ENCODE measurements at regions of chr4 and their contacts with region 1.

Region 1: GRCh38 chr4:77203380-77204197 is 46.6 kb downstream of the CCNG2 start:
- DNase-seq: peak; percentile 45 to 86
- ATAC-seq: peak; percentile 72 to 84 (median 75)
- H3K4me3 ChIP-seq: no peak overlapping the region
- H3K4me3 Mint-ChIP-seq: no peak overlapping the region
- H3K27ac ChIP-seq: no peak overlapping the region
- H3K27ac Mint-ChIP-seq: no peak overlapping the region
- H3K4me1 ChIP-seq: no peaks in the 10 kb centered on the region
- H3K4me1 Mint-ChIP-seq: peaks cover 0 to 6% of the 10 kb centered on the region in 2 donors
- H3K27me3 ChIP-seq: no peaks in the 10 kb centered on the region
- H3K27me3 Mint-ChIP-seq: peaks cover 0 to 10% of the 10 kb centered on the region in 2 donors
- CTCF ChIP-seq: peak; percentile 78

Region 2: GRCh38 chr4:77052352-77052751 is 151.2 kb before region 1 on chr4:
- intact Hi-C with region 1: loop called (anchors 1 kb)
- DNase-seq: peak; percentile 48 to 78
- ATAC-seq: peak; percentile 41 to 75 (median 73)
- H3K4me3 ChIP-seq: no peak overlapping the region
- H3K4me3 Mint-ChIP-seq: no peak overlapping the region
- H3K27ac ChIP-seq: no peak overlapping the region
- H3K27ac Mint-ChIP-seq: peak overlapping the region in 1 of 2 donors; percentile 68
- H3K4me1 ChIP-seq: no peaks in the 10 kb centered on the region
- H3K4me1 Mint-ChIP-seq: peaks cover 0 to 4% of the 10 kb centered on the region in 2 donors
- H3K27me3 ChIP-seq: no peaks in the 10 kb centered on the region
- H3K27me3 Mint-ChIP-seq: no peaks in the 10 kb centered on the region
- CTCF ChIP-seq: peak; percentile 61

Region 3: DNA sequence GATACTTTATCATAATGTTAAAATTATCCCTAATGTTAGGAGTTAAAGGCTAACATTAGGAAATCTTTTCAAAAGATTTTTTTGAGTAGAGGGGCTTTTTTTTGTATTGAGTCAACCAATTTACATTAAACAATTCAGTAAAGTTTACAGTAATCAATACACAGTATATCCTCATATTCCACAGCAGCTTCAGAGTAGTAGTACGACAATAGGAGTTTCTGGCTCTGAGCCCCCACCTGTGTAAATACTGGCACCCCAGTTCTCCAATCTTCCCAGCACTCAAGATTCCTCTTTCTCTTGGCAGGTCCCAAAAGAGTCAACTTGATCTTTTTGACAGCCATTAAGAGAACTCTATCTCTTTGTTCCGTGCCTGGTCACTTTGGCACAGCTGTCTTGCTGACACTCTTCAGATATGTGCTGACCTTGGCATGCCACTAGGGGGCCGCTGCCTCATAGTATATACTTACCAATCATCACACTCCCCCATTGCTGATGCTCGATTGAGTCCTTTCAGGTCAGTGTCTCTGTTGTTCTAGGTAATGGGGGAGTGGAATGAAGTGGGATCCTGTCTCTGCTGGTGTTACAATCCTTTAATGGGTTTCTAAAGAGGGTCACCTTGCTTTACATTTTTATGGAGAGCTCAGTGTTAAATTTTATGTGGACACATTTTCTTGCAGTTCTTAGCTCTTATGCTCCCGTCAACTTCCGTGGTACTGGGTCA is 108.3 kb before region 1 on chr4:
- intact Hi-C with region 1: loop called (anchors 1 kb)
- DNase-seq: peak; percentile 62 to 81
- ATAC-seq: peak; percentile 91 to 100 (median 100)
- H3K4me3 ChIP-seq: no peak overlapping the region
- H3K4me3 Mint-ChIP-seq: no peak overlapping the region
- H3K27ac ChIP-seq: no peak overlapping the region
- H3K27ac Mint-ChIP-seq: no peak overlapping the region
- H3K4me1 ChIP-seq: peaks cover 3% of the 10 kb centered on the region
- H3K4me1 Mint-ChIP-seq: peaks cover 7 to 13% of the 10 kb centered on the region in 2 donors
- H3K27me3 ChIP-seq: no peaks in the 10 kb centered on the region
- H3K27me3 Mint-ChIP-seq: no peaks in the 10 kb centered on the region
- CTCF ChIP-seq: peak; percentile 94

Region 4: DNA sequence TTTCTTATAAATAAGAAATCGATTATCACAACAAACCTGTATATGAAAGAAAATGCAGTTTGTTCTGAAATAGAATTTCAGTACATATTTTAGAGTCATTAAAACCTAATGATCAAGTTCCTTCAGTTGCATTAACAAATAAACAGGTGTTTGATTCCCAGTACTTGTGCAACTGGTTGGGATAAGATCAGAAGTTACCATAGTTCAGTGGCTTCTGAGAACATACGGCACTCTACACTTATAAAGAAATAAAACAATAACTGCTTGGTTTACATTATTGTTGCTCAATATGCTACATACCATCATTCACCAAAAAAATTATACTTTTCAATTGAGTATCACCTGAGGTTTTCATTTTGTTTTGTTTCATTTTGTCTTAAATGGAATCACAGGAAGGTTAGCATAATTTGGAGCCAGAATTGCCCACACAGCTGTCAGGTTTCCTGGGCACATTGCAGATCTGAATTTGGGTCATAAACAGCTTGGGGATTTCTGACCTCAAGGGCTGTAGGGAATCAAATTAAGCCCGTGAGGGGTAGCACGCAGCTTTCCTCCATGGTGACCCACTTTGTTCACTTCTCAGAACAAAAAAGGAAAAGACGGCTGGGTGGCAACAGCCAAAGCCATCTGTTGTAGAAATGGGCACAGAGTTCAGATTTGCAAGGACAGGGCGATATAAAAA is 61.5 kb before region 1 on chr4:
- intact Hi-C with region 1: no loop called
- DNase-seq: peak in 1 of 2 donors; percentile 46
- ATAC-seq: no peak
- H3K4me3 ChIP-seq: no peak overlapping the region
- H3K4me3 Mint-ChIP-seq: no peak overlapping the region
- H3K27ac ChIP-seq: no peak overlapping the region
- H3K27ac Mint-ChIP-seq: no peak overlapping the region
- H3K4me1 ChIP-seq: no peaks in the 10 kb centered on the region
- H3K4me1 Mint-ChIP-seq: peaks cover 16 to 17% of the 10 kb centered on the region in 2 donors
- H3K27me3 ChIP-seq: no peaks in the 10 kb centered on the region
- H3K27me3 Mint-ChIP-seq: no peaks in the 10 kb centered on the region
- CTCF ChIP-seq: no peak

Region 5: DNA sequence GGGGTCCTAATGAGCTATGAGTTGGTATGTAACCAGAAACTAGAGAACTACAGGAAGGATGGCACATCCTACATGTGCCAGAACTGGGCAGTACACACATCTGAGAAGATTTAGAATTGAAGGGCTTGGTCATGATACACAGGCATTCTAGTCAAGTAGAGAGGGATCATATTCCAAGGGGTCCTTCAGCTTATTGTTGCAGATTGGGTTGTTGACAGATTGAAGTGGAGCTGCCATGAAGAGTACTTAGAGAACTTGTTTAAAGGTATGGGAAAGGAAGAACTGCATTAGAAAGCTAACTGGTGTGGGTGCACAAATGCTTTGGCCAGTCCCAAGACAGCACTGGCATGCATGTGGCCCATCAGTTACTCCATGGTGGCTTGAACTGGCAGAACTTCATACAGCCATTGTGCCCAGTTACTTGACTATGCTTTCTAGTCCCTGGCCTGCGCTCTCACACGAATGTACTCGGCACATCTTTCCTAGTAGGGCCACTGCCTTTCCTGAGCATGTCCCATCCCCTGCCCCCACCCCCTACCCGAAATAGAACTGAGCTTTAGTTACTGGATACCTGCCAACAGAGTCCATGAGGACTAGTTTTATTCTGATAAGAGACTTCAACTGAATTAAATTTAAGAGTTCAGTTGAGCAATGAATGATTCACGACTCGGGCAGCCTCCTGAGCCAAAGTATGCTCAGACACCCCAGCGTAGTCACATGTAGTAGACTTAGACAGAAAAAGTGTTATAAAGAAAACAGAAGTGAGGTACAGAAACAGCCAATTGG is 17.4 kb after region 1 on chr4:
- intact Hi-C with region 1: no loop called
- DNase-seq: no peak
- ATAC-seq: no peak
- H3K4me3 ChIP-seq: no peak overlapping the region
- H3K4me3 Mint-ChIP-seq: no peak overlapping the region
- H3K27ac ChIP-seq: no peak overlapping the region
- H3K27ac Mint-ChIP-seq: no peak overlapping the region
- H3K4me1 ChIP-seq: no peaks in the 10 kb centered on the region
- H3K4me1 Mint-ChIP-seq: no peaks in the 10 kb centered on the region
- H3K27me3 ChIP-seq: no peaks in the 10 kb centered on the region
- H3K27me3 Mint-ChIP-seq: peaks cover 2 to 14% of the 10 kb centered on the region in 2 donors
- CTCF ChIP-seq: no peak